AG04450 (cell line): ENCODE measurements at regions of chr6 and their contacts with region 1.

Region 1: DNA sequence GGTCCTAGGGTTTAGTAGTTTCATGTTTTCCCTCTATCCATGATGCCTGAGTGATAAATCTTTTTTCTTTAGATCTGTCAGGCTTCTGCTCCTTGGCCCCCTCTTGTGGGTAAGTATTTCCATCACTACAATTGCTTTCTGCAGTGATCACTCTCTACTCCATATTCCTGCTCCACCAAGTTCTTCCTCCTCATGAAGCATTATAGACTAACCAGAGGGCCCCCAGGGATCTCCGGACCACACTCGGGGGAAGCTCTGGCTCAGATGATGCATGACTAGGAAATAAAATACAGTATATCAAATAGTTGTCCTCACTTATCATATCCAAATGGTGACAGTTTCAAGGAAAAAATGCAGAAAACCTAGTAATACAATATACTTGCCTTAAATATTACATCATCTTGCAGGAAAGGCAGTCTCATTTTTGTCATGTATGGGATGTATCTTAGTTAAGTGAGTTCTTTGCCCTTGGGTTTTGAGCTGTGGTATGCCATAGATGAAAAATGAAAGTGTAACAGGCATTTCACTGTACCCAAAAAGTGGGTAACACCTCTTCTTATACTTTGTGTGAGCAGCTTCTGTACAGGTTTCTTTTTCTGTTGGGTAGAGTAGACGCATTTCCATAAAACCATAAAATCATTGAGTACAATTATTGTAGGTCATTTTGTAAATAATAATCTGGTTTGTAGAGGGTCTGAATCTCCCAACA is 200.9 kb upstream of the EYA4 start:
- DNase-seq: no peak
- H3K4me3 ChIP-seq: no peak overlapping the region
- H3K27ac ChIP-seq: no peak overlapping the region
- H3K27me3 ChIP-seq: no peaks in the 10 kb centered on the region
- CTCF ChIP-seq: peak; percentile 71

Region 2: GRCh38 chr6:132830334-132830751 is 209.9 kb before region 1 on chr6:
- CTCF ChIA-PET with region 1: interaction called, 10 read pairs
- POLR2A ChIA-PET with region 1: no interaction called
- DNase-seq: no peak
- H3K4me3 ChIP-seq: no peak overlapping the region
- H3K27ac ChIP-seq: no peak overlapping the region
- H3K27me3 ChIP-seq: no peaks in the 10 kb centered on the region
- CTCF ChIP-seq: peak; percentile 71

Region 3: GRCh38 chr6:132973514-132973993 is 66.7 kb before region 1 on chr6:
- CTCF ChIA-PET with region 1: no interaction called
- POLR2A ChIA-PET with region 1: interaction called, 13 read pairs
- DNase-seq: no peak
- H3K4me3 ChIP-seq: no peak overlapping the region
- H3K27ac ChIP-seq: no peak overlapping the region
- H3K27me3 ChIP-seq: no peaks in the 10 kb centered on the region
- CTCF ChIP-seq: no peak

Region 4: GRCh38 chr6:132995432-132995831 is 44.8 kb before region 1 on chr6:
- CTCF ChIA-PET with region 1: no interaction called
- POLR2A ChIA-PET with region 1: no interaction called
- DNase-seq: no peak
- H3K4me3 ChIP-seq: no peak overlapping the region
- H3K27ac ChIP-seq: no peak overlapping the region
- H3K27me3 ChIP-seq: no peaks in the 10 kb centered on the region
- CTCF ChIP-seq: no peak

Region 5: DNA sequence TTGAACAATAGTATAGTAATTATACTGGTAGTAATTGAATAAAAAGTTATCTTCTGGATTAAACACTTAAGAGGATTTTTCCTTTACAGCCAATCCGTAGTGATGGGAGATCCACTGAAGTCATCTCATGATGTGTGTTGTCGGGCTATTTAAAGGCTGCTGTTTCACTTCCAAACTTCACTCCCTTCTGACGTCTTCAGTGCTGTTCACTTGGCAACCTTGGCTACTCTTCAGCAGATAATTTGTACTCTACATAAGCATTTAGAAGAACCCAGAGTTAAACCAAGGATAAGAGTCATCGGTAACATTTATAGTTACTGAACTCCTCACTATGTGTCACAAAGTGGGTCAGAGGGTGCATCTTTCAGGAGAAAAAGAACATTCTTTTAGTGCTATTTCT is 21.8 kb after region 1 on chr6:
- CTCF ChIA-PET with region 1: interaction called, 10 read pairs
- POLR2A ChIA-PET with region 1: no interaction called
- DNase-seq: peak; percentile 93
- H3K4me3 ChIP-seq: no peak overlapping the region
- H3K27ac ChIP-seq: no peak overlapping the region
- H3K27me3 ChIP-seq: no peaks in the 10 kb centered on the region
- CTCF ChIP-seq: no peak

Region 6: GRCh38 chr6:133184798-133185372 is 144.6 kb after region 1 on chr6:
- CTCF ChIA-PET with region 1: no interaction called
- POLR2A ChIA-PET with region 1: no interaction called
- DNase-seq: no peak
- H3K4me3 ChIP-seq: no peak overlapping the region
- H3K27ac ChIP-seq: no peak overlapping the region
- H3K27me3 ChIP-seq: no peaks in the 10 kb centered on the region
- CTCF ChIP-seq: peak; percentile 63